Activated CD8-positive, alpha-beta T cell treated with anti-CD3 and anti-CD28 coated beads, Interleukin-2, amount 10 ng/mL, durations not matched to agents 7 days and 5 days (primary cell): ENCODE measurements at regions of chr1 and their contacts with region 1.

Region 1: GRCh38 chr1:168082008-168082876 is 54.5 kb downstream of the GPR161 start:
- DNase-seq: peak; percentile 80
- ATAC-seq: peak; percentile 86
- H3K4me3 Mint-ChIP-seq: no peak overlapping the region
- H3K27ac Mint-ChIP-seq: no peak overlapping the region
- H3K4me1 Mint-ChIP-seq: peaks cover 4% of the 10 kb centered on the region
- H3K27me3 Mint-ChIP-seq: no peaks in the 10 kb centered on the region

Region 2: DNA sequence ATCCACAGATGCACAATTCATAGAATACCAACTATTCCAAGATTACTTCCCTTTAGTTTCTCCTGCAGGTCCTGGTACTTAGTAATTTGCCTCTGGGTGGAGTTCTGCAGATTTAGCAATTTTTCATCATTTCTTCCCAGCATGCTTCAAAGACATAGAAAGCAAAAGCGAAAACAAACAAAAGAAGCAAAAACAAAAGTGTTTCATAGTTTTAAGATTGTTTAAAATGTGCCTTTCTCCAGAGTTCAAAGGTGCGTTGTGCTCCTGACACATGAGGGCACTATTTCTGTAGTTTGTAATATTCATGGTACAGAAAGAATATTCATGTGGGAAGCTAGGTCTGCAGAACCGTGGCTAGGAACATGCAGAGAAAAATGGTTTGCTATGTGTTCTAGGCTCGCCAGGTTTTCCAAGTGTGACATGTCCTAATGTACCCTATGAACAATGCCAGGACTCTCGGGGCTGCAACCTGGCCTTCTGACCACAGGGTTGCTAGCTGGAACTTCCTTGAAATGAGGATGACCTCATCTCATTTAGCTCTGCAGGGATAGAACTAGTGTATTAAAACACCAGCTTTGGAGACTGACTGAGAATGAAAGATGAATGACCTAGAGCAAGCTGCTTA is 482.2 kb before region 1 on chr1:
- CTCF ChIA-PET with region 1: interaction called, 14 read pairs
- POLR2A ChIA-PET with region 1: no interaction called
- DNase-seq: peak; percentile 71
- ATAC-seq: peak; percentile 84
- H3K4me3 Mint-ChIP-seq: peak overlapping the region; percentile 40
- H3K27ac Mint-ChIP-seq: peak overlapping the region; percentile 83
- H3K4me1 Mint-ChIP-seq: peaks cover 42% of the 10 kb centered on the region
- H3K27me3 Mint-ChIP-seq: peaks cover 2% of the 10 kb centered on the region

Region 3: GRCh38 chr1:167927046-167927754 is 155.0 kb before region 1 on chr1:
- CTCF ChIA-PET with region 1: interaction called, 18 read pairs
- POLR2A ChIA-PET with region 1: no interaction called
- DNase-seq: no peak
- ATAC-seq: no peak
- H3K4me3 Mint-ChIP-seq: no peak overlapping the region
- H3K27ac Mint-ChIP-seq: no peak overlapping the region
- H3K4me1 Mint-ChIP-seq: peaks cover 2% of the 10 kb centered on the region
- H3K27me3 Mint-ChIP-seq: no peaks in the 10 kb centered on the region

Region 4: GRCh38 chr1:168054117-168054516 is 28.1 kb before region 1 on chr1:
- CTCF ChIA-PET with region 1: interaction called, 16 read pairs
- POLR2A ChIA-PET with region 1: no interaction called
- DNase-seq: no peak
- ATAC-seq: no peak
- H3K4me3 Mint-ChIP-seq: no peak overlapping the region
- H3K27ac Mint-ChIP-seq: no peak overlapping the region
- H3K4me1 Mint-ChIP-seq: peaks cover 4% of the 10 kb centered on the region
- H3K27me3 Mint-ChIP-seq: no peaks in the 10 kb centered on the region

Region 5: DNA sequence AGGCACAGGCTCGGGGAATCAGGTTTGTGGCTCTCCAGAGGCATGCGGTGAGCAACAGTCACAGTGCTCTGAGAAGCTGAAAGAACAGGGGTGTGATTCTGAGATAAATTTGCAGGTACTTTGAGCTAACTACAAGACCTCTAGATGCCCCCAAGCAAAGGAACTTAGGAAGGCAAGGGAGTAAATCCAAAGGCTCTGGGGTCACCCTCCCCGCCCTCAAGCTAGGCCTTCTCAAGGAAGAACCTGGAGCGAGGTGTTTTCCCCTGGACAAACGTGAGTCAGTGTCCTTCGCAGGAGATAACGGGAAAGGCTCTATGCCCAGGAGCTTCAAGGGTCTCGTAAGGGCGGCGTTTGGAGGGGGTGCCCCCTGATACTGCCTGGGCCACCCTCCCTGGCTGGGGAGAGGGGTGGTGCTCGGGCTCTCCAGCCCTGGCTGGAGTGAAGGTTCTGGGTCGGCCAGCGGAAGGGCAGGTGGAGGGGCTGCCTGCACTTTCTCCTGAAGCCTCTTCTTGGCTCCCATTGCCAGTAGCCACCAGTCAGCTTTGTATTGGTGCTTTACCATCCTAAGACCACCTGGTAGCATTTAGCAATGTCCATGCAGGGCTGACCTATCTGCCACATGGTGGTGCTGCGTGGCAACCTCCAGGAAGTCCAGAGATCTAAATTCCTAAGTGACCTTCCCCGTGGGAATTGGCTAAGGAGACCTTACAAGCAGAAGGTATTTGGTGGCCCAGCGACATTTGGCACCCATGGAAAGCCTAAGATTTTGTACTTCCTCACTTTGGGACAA is 10.5 kb after region 1 on chr1:
- CTCF ChIA-PET with region 1: interaction called, 18 read pairs
- POLR2A ChIA-PET with region 1: no interaction called
- DNase-seq: no peak
- ATAC-seq: no peak
- H3K4me3 Mint-ChIP-seq: no peak overlapping the region
- H3K27ac Mint-ChIP-seq: no peak overlapping the region
- H3K4me1 Mint-ChIP-seq: no peaks in the 10 kb centered on the region
- H3K27me3 Mint-ChIP-seq: no peaks in the 10 kb centered on the region

Region 6: DNA sequence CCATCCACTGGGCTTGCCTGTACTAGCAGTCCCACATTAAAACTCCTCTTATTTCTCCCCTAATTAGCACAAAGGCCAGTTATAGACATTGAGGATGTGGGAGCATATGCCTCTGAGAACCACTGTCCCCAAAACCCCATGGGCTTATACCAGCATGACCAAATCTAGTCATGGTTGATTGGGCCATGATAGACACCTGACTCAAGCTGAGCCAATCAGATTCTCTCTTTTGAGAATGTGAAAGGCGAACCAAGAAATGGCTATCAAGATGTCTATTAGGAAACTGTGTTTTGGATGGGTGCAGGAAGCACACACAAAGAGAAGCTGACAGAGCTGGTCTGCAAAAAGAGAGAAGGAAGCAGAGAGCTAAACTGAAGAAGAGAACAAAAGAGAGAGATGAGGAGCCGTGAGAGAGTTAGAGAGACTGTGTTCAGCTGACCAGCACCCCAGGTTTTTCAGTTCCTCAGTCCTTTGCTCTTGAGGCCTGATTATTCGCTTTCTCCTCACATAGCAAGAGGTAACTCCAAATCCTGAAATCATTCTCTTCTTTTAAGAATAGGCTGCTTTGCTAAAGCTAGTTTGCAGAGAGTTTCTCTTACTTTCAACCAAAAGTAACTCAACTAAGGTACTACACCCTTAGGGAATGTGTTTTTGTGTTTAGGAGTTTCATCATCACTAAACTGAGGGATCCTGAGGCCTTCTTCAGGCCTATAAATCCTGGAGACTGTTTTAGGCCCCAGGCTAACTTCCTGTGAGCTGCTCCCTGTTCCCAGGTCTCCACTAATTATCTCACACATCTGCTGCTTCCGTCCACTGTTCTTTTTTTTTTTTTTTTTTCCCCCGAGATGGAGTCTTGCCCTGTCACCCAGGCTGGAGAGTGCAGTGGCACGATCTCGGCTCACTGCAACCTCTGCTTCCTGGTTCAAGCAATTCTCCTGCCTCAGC is 88.6 kb after region 1 on chr1:
- CTCF ChIA-PET with region 1: no interaction called
- POLR2A ChIA-PET with region 1: no interaction called
- DNase-seq: no peak
- ATAC-seq: no peak
- H3K4me3 Mint-ChIP-seq: no peak overlapping the region
- H3K27ac Mint-ChIP-seq: no peak overlapping the region
- H3K4me1 Mint-ChIP-seq: no peaks in the 10 kb centered on the region
- H3K27me3 Mint-ChIP-seq: peaks cover 2% of the 10 kb centered on the region